ENCODE measurements at regions of chr10 and their contacts with region 1.

Region 1: DNA sequence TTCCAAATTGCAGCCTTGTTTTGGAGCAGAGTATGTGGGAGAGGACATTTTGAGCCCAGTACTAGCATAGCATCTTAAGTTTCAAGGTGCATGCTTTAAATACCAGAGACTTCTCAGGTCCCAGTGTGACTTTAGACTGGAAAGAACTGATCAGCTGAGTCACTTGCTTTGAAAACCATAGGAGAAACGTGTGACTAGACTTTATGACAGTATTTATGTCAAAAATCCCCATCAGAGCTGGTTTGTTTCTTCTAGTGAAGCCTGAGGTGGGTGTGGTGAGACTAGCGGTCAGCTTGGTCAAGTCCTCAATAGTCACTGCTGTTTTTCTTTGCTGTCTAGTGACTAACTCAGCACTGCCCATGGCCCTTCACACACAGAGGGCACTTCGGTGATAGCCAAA is 724.2 kb downstream of the GATA3 start:
- DNase-seq: no peak
- H3K4me3 ChIP-seq: no peak overlapping the region
- H3K27ac ChIP-seq: no peak overlapping the region
- H3K4me1 ChIP-seq: no peaks in the 10 kb centered on the region
- H3K27me3 ChIP-seq: no peaks in the 10 kb centered on the region
- CTCF ChIP-seq: no peak
- EP300 ChIP-seq: no peak
- POLR2A ChIP-seq: no peak

Region 2: GRCh38 chr10:7866176-7866575 is 912.5 kb before region 1 on chr10:
- intact Hi-C with region 1: loop called in 1 of 4 experiments (anchors 10 kb)
- DNase-seq: no peak
- H3K4me3 ChIP-seq: no peak overlapping the region
- H3K27ac ChIP-seq: no peak overlapping the region
- H3K4me1 ChIP-seq: no peaks in the 10 kb centered on the region
- H3K27me3 ChIP-seq: no peaks in the 10 kb centered on the region
- CTCF ChIP-seq: no peak
- EP300 ChIP-seq: no peak
- POLR2A ChIP-seq: no peak

Region 3: GRCh38 chr10:8758029-8758428 is 20.7 kb before region 1 on chr10:
- intact Hi-C with region 1: loop called in 1 of 4 experiments (anchors 1 kb)
- DNase-seq: no peak
- H3K4me3 ChIP-seq: no peak overlapping the region
- H3K27ac ChIP-seq: no peak overlapping the region
- H3K4me1 ChIP-seq: no peaks in the 10 kb centered on the region
- H3K27me3 ChIP-seq: no peaks in the 10 kb centered on the region
- CTCF ChIP-seq: no peak
- EP300 ChIP-seq: no peak
- POLR2A ChIP-seq: no peak